ENCODE measurements at regions of chr7 and their contacts with region 1.

Region 1: DNA sequence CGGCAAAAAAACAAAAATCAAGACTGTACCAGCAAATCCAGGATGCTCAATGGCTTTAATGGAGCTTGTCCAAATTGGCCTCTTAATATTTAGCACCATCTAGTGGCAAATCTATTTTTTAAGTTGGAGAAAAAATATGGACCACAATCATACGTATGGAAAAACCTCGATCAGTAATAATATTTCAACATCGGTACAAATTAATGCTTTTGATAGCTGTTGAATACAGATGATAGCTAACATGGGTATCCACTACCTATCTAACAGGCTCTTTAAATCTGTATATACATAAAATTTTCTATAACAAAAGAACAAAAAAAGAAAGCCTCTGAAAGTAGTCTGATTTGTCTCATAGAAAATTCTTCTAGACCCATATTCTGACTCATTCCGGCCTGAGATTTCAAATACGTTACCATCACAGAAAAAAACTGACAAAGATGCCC is 29.2 kb downstream of the COA1 start:
- DNase-seq: no peak
- ATAC-seq: peak; percentile 50
- H3K4me3 Mint-ChIP-seq: no peak overlapping the region
- H3K27ac Mint-ChIP-seq: no peak overlapping the region
- H3K4me1 Mint-ChIP-seq: peaks cover 60% of the 10 kb centered on the region
- H3K27me3 Mint-ChIP-seq: no peaks in the 10 kb centered on the region
- CTCF ChIP-seq: peak; percentile 91

Region 2: GRCh38 chr7:43454936-43455518 is 245.1 kb before region 1 on chr7:
- CTCF ChIA-PET with region 1: interaction called, 10 read pairs
- POLR2A ChIA-PET with region 1: no interaction called
- intact Hi-C with region 1: no loop called
- DNase-seq: no peak
- ATAC-seq: no peak
- H3K4me3 Mint-ChIP-seq: no peak overlapping the region
- H3K27ac Mint-ChIP-seq: no peak overlapping the region
- H3K4me1 Mint-ChIP-seq: no peaks in the 10 kb centered on the region
- H3K27me3 Mint-ChIP-seq: no peaks in the 10 kb centered on the region
- CTCF ChIP-seq: peak; percentile 68

Region 3: DNA sequence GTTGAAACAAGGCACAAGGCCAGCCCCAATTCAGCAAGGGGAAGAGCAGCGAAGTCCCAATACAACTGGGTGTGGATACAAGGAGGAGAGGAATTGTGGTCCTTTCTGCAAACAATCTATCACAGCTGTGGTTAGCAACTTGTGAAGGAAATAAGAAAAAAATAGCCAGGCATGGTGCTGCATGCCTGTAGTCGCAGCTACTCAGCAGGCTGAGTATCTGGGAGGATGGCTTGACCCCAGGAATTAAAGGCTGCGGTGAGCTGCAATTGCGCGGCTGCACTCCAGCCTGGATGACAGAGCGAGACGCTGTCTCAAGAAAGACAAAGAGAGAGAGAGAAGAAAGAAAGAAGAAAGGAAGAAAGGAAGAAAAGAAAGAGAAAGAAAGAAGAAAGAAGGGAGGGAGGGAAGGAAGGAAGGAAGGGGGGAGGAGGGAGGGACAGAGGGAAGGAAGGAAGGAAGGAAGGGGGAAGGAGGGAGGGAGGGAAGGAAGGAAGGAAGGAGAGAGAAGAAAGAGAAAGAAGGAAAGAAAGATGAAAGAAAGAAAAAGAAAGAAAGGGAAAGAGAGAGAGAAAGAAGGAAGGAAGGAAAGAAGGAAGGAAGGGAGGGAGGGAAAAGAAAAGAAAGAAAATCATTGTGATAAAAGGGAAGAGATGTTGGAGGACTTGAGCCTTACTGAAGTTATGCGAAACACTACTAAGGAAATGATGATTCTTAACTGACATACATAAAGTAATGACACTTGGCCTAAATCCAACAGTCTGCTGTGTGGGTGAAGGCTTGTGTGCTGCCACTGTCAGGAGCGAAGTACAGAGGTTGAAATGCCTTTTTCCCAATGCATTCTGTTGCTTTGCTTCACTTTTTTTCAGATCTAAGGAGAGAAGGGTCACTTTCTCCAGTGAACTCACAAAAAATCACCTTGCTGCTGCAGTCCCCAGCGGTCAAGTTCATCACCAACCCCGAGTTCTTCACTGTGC is 234.2 kb before region 1 on chr7:
- CTCF ChIA-PET with region 1: no interaction called
- POLR2A ChIA-PET with region 1: no interaction called
- intact Hi-C with region 1: no loop called
- DNase-seq: no peak
- ATAC-seq: no peak
- H3K4me3 Mint-ChIP-seq: no peak overlapping the region
- H3K27ac Mint-ChIP-seq: no peak overlapping the region
- H3K4me1 Mint-ChIP-seq: no peaks in the 10 kb centered on the region
- H3K27me3 Mint-ChIP-seq: peaks cover 12% of the 10 kb centered on the region
- CTCF ChIP-seq: no peak

Region 4: DNA sequence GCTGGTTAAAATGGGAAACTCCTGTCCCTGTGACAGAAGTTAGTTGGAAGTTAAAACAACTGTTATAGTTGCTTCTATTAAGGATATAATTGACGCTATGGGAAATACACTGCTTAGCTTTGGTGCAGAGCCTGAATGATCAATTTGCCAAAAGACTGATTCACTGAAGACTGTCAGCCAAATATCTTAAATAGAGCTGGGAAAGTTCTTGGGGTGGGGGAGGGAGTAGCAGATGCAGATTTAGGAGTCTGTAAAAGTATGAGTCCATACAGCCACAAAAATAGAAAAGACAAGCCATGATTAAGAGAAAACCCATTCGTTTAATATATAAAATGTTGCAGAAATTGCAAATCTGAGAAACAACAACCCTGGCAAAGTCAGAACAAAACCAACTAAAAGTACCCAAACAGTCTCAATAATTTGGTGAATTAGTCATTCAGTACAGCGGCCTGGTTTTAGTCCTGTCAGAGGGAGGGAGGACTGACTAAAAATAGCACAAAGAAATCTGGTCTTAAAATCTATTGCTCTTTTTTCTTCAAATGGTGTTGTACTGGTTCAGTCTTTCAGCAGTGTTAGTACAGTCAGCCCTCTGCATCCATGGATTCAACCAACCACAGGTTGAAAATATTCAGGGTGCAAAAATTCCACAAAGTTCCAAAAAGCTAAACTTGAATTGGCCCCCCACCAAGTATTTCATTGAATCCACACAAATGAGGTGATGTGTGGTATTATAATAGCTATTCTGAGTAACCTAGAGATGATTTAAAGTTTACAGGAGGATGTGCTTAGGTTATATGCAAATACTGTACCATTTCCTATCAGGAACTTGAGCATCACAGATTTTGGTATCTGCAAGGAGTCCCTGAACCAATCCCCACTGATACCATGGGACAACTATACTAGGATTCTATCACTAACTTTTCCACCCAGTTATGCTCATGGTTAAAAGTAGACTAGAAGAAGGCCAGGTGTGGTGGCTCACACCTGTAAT is 87.2 kb before region 1 on chr7:
- CTCF ChIA-PET with region 1: interaction called, 50 read pairs
- POLR2A ChIA-PET with region 1: no interaction called
- intact Hi-C with region 1: no loop called
- DNase-seq: peak; percentile 52
- ATAC-seq: peak; percentile 79
- H3K4me3 Mint-ChIP-seq: peak overlapping the region; percentile 22
- H3K27ac Mint-ChIP-seq: peak overlapping the region; percentile 96
- H3K4me1 Mint-ChIP-seq: peaks cover 67% of the 10 kb centered on the region
- H3K27me3 Mint-ChIP-seq: no peaks in the 10 kb centered on the region
- CTCF ChIP-seq: no peak

Region 5: GRCh38 chr7:43639858-43640491 is 60.1 kb before region 1 on chr7:
- CTCF ChIA-PET with region 1: interaction called, 19 read pairs
- POLR2A ChIA-PET with region 1: interaction called, 8 read pairs
- intact Hi-C with region 1: loop called (anchors 5 kb)
- DNase-seq: no peak
- ATAC-seq: no peak
- H3K4me3 Mint-ChIP-seq: peak overlapping the region; percentile 7
- H3K27ac Mint-ChIP-seq: peak overlapping the region; percentile 84
- H3K4me1 Mint-ChIP-seq: peaks cover 94% of the 10 kb centered on the region
- H3K27me3 Mint-ChIP-seq: no peaks in the 10 kb centered on the region
- CTCF ChIP-seq: no peak

Region 6: DNA sequence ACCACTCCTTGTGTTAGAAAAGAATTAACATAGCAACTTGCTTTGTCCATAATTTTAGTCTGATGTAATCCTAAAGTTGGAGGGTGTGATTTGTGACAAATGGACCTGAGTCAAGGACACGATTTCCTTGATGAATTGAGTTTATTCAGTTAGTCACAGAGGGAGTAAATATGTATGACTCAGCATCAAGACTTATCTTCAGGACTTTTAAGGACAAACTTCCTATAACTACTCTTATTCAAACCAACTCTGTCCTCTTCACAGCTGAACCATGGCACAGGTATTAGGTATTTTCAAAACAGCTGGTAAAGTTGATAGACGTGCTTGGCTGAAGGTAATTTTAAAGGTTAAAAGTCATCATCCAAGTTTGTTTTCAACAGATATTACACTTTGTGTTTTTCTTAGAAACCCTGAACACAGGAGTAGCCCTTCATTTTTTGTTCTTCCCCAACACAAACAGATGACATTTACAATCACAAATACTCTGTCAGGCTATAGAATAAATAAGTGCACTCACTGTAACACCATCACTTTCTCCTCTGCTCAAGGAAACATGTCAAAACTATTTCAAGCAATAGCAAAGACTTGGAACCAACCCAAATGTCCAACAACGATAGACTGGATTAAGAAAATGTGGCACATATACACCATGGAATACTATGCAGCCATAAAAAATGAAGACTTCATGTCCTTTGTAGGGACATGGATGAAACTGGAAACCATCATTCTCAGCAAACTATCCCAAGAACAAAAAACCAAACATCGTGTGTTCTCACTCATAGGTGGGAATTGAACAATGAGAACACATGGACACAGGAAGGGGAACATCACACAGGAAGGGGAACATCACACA is 25.3 kb before region 1 on chr7:
- CTCF ChIA-PET with region 1: interaction called, 21 read pairs
- POLR2A ChIA-PET with region 1: no interaction called
- intact Hi-C with region 1: no loop called
- DNase-seq: no peak
- ATAC-seq: no peak
- H3K4me3 Mint-ChIP-seq: no peak overlapping the region
- H3K27ac Mint-ChIP-seq: peak overlapping the region; percentile 48
- H3K4me1 Mint-ChIP-seq: peaks cover 79% of the 10 kb centered on the region
- H3K27me3 Mint-ChIP-seq: no peaks in the 10 kb centered on the region
- CTCF ChIP-seq: no peak

Region 7: DNA sequence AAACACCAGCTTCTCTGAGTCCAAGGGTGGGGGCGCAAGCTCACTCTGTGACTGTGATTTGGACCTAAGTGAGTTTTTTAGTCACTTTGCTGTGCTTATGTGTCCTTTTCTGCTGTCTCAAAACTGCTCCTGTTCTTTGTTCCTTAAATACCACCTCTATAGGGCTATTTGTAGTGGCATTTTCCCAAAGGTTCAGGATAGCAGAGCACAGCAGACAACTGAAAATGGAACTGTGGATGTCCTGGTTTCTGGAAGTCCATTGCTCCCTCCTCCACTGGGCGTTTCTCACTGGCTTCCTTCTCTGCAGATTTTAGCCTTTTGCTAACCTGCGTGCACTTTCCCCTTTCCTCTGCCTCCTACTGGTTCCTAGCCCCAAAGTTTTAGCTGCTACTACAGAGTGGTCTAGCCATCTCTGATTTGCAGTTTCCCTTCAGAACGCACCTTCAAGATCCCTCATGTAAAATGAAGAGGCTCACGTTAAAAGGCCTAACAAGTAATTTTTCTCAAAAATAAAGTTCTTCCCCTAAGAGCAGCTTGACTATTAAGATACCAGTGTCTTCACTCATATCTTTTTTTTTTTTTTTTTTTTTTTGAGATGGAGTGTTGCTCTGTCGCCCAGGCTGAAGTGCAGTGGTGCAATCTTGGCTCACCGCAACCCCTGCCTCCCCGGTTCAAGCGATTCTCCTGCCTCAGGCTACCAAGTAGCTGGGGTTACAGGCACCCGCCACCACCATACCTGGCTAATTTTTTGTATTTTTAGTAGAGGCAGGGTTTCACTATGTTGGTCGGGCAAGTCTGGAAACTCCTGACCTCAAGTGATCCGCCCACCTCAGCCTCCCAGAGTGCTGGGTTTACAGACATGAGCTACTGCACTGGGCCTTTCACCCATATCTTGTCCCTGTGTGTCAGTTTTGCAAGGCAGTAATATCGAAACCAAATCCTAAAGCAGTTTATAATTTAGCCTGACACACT is 84.2 kb after region 1 on chr7:
- CTCF ChIA-PET with region 1: no interaction called
- POLR2A ChIA-PET with region 1: no interaction called
- intact Hi-C with region 1: no loop called
- DNase-seq: peak; percentile 78
- ATAC-seq: peak; percentile 95
- H3K4me3 Mint-ChIP-seq: no peak overlapping the region
- H3K27ac Mint-ChIP-seq: peak overlapping the region; percentile 13
- H3K4me1 Mint-ChIP-seq: peaks cover 12% of the 10 kb centered on the region
- H3K27me3 Mint-ChIP-seq: no peaks in the 10 kb centered on the region
- CTCF ChIP-seq: no peak

Region 8: GRCh38 chr7:43834463-43835251 is 134.6 kb after region 1 on chr7:
- CTCF ChIA-PET with region 1: interaction called, 26 read pairs
- POLR2A ChIA-PET with region 1: no interaction called
- intact Hi-C with region 1: no loop called
- DNase-seq: peak; percentile 62
- ATAC-seq: peak; percentile 63
- H3K4me3 Mint-ChIP-seq: peak overlapping the region; percentile 75
- H3K27ac Mint-ChIP-seq: peak overlapping the region; percentile 94
- H3K4me1 Mint-ChIP-seq: peaks cover 32% of the 10 kb centered on the region
- H3K27me3 Mint-ChIP-seq: peaks cover 2% of the 10 kb centered on the region
- CTCF ChIP-seq: no peak

Measured in activated CD8-positive, alpha-beta T cell treated with anti-CD3 and anti-CD28 coated beads for 36 hours (primary cell).